CD4-positive, alpha-beta memory T cell (primary cell): ENCODE measurements at regions of chr16 and their contacts with region 1.

Region 1: DNA sequence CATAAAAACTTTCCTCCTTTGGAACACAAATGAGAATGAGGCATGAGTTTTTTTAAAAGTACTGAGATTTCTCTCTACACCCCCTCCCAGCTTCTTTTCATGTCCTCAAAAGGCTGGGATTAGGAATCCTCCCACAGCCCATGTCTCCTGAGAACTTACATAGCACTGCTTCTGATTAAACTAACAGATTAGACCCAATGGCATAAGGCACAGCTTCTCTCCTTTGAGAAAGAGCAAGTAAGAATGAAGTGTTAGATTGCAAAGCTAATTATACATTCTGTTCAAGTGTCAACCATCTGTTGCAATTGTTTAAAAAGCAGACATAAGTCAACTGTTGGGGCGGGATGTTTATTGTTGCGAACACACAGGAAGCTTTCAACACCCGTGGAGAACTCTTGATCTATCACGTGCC is 715.1 kb downstream of the CDH11 start:
- DNase-seq: no peak
- H3K4me3 ChIP-seq: no peak overlapping the region
- H3K4me3 Mint-ChIP-seq: no peak overlapping the region
- H3K27ac ChIP-seq: no peak overlapping the region
- H3K27ac Mint-ChIP-seq: no peak overlapping the region
- H3K4me1 ChIP-seq: no peaks in the 10 kb centered on the region
- H3K4me1 Mint-ChIP-seq: no peaks in the 10 kb centered on the region
- H3K27me3 ChIP-seq: no peaks in the 10 kb centered on the region
- H3K27me3 Mint-ChIP-seq: no peaks in the 10 kb centered on the region

Region 2: DNA sequence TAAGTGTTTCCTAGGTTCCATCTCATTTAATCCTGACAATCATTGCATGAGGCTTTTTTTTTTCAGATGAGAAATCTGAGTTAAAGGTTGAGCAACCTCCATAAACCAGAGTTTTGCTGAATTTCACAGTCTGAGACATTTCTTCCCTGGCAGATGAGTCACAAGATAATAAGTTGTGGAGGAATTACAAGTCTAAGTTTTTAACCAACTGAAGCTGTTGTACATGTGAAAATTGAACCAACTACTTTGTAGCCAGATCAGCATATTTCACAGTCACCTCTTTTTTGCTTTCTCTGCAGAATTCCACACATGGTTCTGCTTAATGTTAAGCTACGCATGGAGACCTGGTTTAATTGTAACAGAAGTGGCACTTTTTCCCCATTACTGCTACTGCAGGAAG is 50.5 kb before region 1 on chr16:
- CTCF ChIA-PET with region 1: no interaction called
- POLR2A ChIA-PET with region 1: no interaction called
- intact Hi-C with region 1: loop called (anchors 10 kb)
- DNase-seq: no peak
- H3K4me3 ChIP-seq: no peak overlapping the region
- H3K4me3 Mint-ChIP-seq: no peak overlapping the region
- H3K27ac ChIP-seq: no peak overlapping the region
- H3K27ac Mint-ChIP-seq: peak overlapping the region in 1 of 7 donors; percentile 47
- H3K4me1 ChIP-seq: no peaks in the 10 kb centered on the region
- H3K4me1 Mint-ChIP-seq: no peaks in the 10 kb centered on the region
- H3K27me3 ChIP-seq: no peaks in the 10 kb centered on the region
- H3K27me3 Mint-ChIP-seq: no peaks in the 10 kb centered on the region

Region 3: GRCh38 chr16:64417711-64418227 is 11.0 kb after region 1 on chr16:
- CTCF ChIA-PET with region 1: no interaction called
- POLR2A ChIA-PET with region 1: no interaction called
- intact Hi-C with region 1: no loop called
- DNase-seq: no peak
- H3K4me3 ChIP-seq: no peak overlapping the region
- H3K4me3 Mint-ChIP-seq: no peak overlapping the region
- H3K27ac ChIP-seq: no peak overlapping the region
- H3K27ac Mint-ChIP-seq: no peak overlapping the region
- H3K4me1 ChIP-seq: no peaks in the 10 kb centered on the region
- H3K4me1 Mint-ChIP-seq: peaks cover 0 to 5% (median 2%) of the 10 kb centered on the region in 4 donors
- H3K27me3 ChIP-seq: no peaks in the 10 kb centered on the region
- H3K27me3 Mint-ChIP-seq: no peaks in the 10 kb centered on the region

Region 4: GRCh38 chr16:64440421-64440831 is 33.6 kb after region 1 on chr16:
- CTCF ChIA-PET with region 1: no interaction called
- POLR2A ChIA-PET with region 1: no interaction called
- intact Hi-C with region 1: no loop called
- DNase-seq: no peak
- H3K4me3 ChIP-seq: no peak overlapping the region
- H3K4me3 Mint-ChIP-seq: no peak overlapping the region
- H3K27ac ChIP-seq: no peak overlapping the region
- H3K27ac Mint-ChIP-seq: no peak overlapping the region
- H3K4me1 ChIP-seq: no peaks in the 10 kb centered on the region
- H3K4me1 Mint-ChIP-seq: no peaks in the 10 kb centered on the region
- H3K27me3 ChIP-seq: no peaks in the 10 kb centered on the region
- H3K27me3 Mint-ChIP-seq: no peaks in the 10 kb centered on the region

Region 5: DNA sequence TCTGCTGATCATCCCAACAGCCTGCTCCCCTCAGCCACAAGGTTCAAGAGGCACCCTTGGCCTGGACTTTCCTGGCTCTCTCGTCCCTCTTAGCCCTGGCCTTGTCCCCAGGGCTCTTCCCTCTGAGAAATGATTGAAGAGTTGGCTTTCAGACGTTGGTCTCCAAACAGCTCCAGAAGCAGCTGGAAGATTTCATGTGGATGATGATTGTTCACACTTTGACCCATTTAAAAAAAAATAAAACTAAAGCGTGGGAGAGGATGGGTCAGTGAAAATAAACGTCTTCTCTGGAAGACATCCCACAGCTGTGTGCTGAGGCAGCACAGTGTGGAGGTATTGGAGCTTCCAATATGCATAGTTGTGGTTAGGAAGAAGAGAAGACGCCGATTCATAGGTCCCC is 769.8 kb after region 1 on chr16:
- CTCF ChIA-PET with region 1: no interaction called
- POLR2A ChIA-PET with region 1: no interaction called
- intact Hi-C with region 1: no loop called
- DNase-seq: no peak
- H3K4me3 ChIP-seq: no peak overlapping the region
- H3K4me3 Mint-ChIP-seq: no peak overlapping the region
- H3K27ac ChIP-seq: no peak overlapping the region
- H3K27ac Mint-ChIP-seq: no peak overlapping the region
- H3K4me1 ChIP-seq: no peaks in the 10 kb centered on the region
- H3K4me1 Mint-ChIP-seq: no peaks in the 10 kb centered on the region
- H3K27me3 ChIP-seq: no peaks in the 10 kb centered on the region
- H3K27me3 Mint-ChIP-seq: no peaks in the 10 kb centered on the region

Region 6: DNA sequence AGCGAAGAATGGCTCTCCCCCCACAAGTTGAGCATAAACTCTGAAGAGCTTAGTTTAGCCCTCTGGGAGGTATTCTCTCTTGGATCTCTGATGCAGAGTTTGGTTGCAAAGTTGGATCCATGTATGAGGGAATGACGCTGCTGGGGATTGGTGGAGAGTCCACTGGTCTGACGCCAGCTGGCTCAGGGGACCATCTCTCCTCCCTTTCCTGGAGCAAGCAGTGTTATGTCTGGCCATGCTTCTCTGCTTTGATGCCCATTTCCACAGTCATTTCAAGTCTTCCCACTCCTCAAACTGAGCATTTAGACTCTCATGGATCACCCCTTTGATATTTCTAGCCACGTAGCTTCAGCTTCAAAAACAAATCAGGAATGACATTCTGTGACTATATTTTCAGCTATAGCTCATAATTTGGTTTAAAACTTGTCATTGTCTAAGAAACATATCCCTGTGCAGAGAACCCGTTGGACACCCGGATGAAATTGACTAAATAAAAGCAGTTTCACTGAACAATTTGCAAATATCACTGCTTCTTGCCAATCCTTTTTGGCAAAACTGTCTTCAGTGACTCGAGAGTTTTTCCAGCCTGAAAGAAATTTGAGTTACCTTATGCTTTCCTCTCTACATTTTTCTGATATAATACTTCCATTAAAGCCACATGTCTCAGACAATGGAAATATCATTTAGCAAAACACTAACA is 908.5 kb after region 1 on chr16:
- CTCF ChIA-PET with region 1: no interaction called
- POLR2A ChIA-PET with region 1: no interaction called
- intact Hi-C with region 1: no loop called
- DNase-seq: no peak
- H3K4me3 ChIP-seq: no peak overlapping the region
- H3K4me3 Mint-ChIP-seq: no peak overlapping the region
- H3K27ac ChIP-seq: no peak overlapping the region
- H3K27ac Mint-ChIP-seq: no peak overlapping the region
- H3K4me1 ChIP-seq: no peaks in the 10 kb centered on the region
- H3K4me1 Mint-ChIP-seq: no peaks in the 10 kb centered on the region
- H3K27me3 ChIP-seq: no peaks in the 10 kb centered on the region
- H3K27me3 Mint-ChIP-seq: no peaks in the 10 kb centered on the region